ENCODE measurements at regions of chr2 and their contacts with region 1.

Region 1: GRCh38 chr2:77995161-77995560 is 473.0 kb upstream of the LRRTM4 start:
- DNase-seq: no peak
- ATAC-seq: no peak
- H3K4me3 ChIP-seq: no peak overlapping the region
- H3K27ac ChIP-seq: no peak overlapping the region
- H3K4me1 ChIP-seq: no peaks in the 10 kb centered on the region
- H3K27me3 ChIP-seq: no peaks in the 10 kb centered on the region
- CTCF ChIP-seq: no peak

Region 2: GRCh38 chr2:77954931-77955330 is 40.2 kb before region 1 on chr2:
- intact Hi-C with region 1: loop called in 1 of 2 experiments (anchors 1 kb)
- DNase-seq: no peak
- ATAC-seq: no peak
- H3K4me3 ChIP-seq: no peak overlapping the region
- H3K27ac ChIP-seq: no peak overlapping the region
- H3K4me1 ChIP-seq: no peaks in the 10 kb centered on the region
- H3K27me3 ChIP-seq: no peaks in the 10 kb centered on the region
- CTCF ChIP-seq: no peak

Measured in psoas muscle (tissue), 8 donors.